Mammary epithelial cell (primary cell): ENCODE measurements at regions of chr4 and their contacts with region 1.

Region 1: DNA sequence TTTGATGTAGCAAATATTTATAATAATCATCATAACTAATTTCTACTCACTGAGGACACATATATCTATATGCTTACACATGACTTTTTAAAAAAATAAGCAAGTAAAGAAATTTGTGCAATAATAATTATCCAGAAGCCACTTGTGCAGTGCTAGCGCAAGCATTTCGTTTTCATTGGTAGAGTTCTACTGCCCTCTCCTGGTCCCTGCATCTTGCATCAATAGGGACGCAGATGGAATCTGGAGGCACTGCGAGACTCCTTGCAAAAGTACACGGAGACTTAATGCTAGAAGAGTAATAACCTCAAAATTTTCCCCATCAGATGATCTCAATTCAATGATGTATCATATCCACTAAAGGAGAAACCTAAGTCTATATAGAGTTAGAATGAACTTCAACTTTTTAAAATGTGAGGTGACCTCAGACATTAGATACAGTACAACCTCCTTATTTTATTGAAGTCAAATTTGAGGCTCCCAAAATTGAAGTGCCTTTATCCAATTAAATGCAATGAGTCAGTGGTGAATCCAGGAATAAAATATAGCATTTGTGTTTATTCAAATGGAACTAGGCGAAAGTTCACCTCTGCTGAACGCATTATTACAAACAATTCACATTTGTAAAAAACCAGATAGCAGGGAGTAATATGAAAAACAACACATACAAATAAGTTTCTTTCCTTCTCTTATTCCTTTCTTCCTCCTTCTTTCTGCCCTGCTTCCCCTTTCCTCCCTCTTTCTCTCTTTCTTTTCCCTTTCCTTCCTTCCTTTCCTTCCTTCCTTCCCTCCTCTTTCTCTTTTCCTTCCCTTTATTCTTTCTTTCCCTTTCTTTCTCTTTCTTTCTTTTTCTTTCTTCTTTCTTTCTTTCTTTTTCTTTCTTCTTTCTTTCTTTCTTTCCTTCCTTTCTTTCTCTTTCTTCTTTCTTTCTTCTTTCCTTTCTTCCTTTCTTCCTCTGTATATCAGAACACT is 450.0 kb downstream of the ANKRD50 start:
- DNase-seq: peak; percentile 64
- H3K4me3 ChIP-seq: no peak overlapping the region
- H3K27ac ChIP-seq: no peak overlapping the region
- H3K4me1 ChIP-seq: no peaks in the 10 kb centered on the region
- H3K27me3 ChIP-seq: no peaks in the 10 kb centered on the region
- CTCF ChIP-seq: peak; percentile 90 to 93

Region 2: GRCh38 chr4:123564758-123565346 is 697.6 kb before region 1 on chr4:
- CTCF ChIA-PET with region 1: no interaction called
- dilution Hi-C with region 1: no loop called
- in situ Hi-C with region 1: no loop called
- intact Hi-C with region 1: loop called (anchors 2 kb)
- DNase-seq: peak; percentile 72
- H3K4me3 ChIP-seq: no peak overlapping the region
- H3K27ac ChIP-seq: no peak overlapping the region
- H3K4me1 ChIP-seq: peaks cover 5% of the 10 kb centered on the region
- H3K27me3 ChIP-seq: no peaks in the 10 kb centered on the region
- CTCF ChIP-seq: peak; percentile 92 to 99

Region 3: GRCh38 chr4:123750044-123750443 is 512.5 kb before region 1 on chr4:
- CTCF ChIA-PET with region 1: no interaction called
- dilution Hi-C with region 1: no loop called
- in situ Hi-C with region 1: loop called (anchors 25 kb)
- intact Hi-C with region 1: no loop called
- DNase-seq: no peak
- H3K4me3 ChIP-seq: no peak overlapping the region
- H3K27ac ChIP-seq: no peak overlapping the region
- H3K4me1 ChIP-seq: no peaks in the 10 kb centered on the region
- H3K27me3 ChIP-seq: no peaks in the 10 kb centered on the region
- CTCF ChIP-seq: no peak

Region 4: GRCh38 chr4:124118084-124118460 is 144.4 kb before region 1 on chr4:
- CTCF ChIA-PET with region 1: no interaction called
- dilution Hi-C with region 1: no loop called
- in situ Hi-C with region 1: no loop called
- intact Hi-C with region 1: loop called (anchors 5 kb)
- DNase-seq: no peak
- H3K4me3 ChIP-seq: no peak overlapping the region
- H3K27ac ChIP-seq: no peak overlapping the region
- H3K4me1 ChIP-seq: no peaks in the 10 kb centered on the region
- H3K27me3 ChIP-seq: no peaks in the 10 kb centered on the region
- CTCF ChIP-seq: no peak

Region 5: GRCh38 chr4:124322234-124323065 is 60.0 kb after region 1 on chr4:
- CTCF ChIA-PET with region 1: no interaction called
- dilution Hi-C with region 1: no loop called
- in situ Hi-C with region 1: no loop called
- intact Hi-C with region 1: loop called (anchors 1 kb)
- DNase-seq: peak; percentile 24
- H3K4me3 ChIP-seq: no peak overlapping the region
- H3K27ac ChIP-seq: no peak overlapping the region
- H3K4me1 ChIP-seq: no peaks in the 10 kb centered on the region
- H3K27me3 ChIP-seq: no peaks in the 10 kb centered on the region
- CTCF ChIP-seq: peak; percentile 42 to 48